ENCODE measurements at regions of chr7 and their contacts with region 1.

Region 1: DNA sequence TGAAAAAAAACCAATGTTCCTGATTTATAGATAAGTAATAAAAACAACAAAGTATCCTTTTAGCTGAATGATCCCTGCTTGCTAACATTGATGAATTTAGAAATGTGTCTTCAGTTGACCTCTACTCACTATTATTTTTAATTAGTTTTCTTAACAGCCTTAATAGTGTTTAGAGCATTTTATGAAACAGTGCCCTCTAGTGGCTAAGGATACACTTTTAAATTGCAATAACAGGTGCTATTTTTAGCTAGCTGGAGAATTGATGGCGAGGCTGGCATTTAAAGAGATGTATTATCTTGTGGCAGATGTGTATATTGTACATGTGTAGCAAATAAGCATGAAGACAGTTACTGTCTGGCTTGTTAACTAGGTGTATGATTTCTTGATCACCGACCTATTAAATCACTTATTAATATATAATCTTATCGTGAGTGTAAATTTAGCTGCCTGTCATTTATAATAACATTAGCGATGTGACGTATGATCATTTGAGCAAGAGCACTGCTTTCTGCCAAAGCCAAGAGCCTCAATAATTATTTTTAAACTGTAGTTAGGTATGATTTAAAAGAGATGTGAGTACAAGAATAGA is 451.9 kb downstream of the DPP6 start:
- DNase-seq: no peak
- ATAC-seq: no peak
- H3K4me3 Mint-ChIP-seq: no peak overlapping the region
- H3K27ac Mint-ChIP-seq: no peak overlapping the region
- H3K4me1 Mint-ChIP-seq: no peaks in the 10 kb centered on the region
- H3K27me3 Mint-ChIP-seq: no peaks in the 10 kb centered on the region
- CTCF ChIP-seq: no peak

Region 2: DNA sequence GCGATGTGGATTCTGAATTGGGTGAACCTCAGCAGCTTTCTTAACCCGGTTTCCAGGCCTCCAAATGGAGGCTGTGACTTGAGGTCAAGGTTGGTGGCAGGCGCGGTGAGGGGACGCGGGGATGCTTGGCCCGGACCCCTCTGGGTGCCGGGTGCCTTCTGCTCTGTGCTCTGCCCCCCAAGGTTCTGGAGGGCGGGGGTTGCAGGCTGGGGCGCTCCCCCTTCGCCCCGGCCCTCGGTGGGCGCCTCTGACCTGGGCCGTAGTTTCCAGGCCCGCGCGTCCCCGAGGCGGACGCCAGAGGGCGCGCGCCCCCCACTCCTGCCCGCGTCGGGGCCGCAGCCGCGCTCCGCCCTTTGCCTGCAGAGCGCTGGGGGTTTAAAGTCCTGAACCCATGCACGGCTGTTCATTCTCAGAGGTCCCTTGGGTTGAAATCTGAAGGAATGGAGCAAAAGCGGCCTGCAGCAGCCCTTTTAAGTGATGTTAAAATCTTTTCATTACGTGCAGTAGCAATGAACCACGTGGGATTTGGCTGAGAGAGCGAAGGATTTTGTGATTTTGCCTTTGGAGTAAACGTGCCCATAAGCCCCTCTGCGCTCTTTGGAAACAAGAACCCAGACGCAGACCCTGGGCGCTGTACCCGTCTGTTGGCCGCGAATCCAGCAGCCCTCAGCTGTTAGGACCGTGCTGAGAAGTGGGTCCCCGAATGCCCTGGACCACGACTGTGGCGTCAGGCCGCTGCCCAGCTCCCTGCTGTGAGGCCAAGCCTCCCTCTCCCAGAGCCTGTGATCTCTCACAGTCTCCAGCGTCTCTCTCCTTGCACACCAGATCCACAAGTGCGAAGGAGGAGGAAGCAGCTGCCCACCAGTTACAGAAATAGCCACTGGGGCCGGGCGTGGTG is 1609.5 kb before region 1 on chr7:
- CTCF ChIA-PET with region 1: interaction called, 3 read pairs
- POLR2A ChIA-PET with region 1: no interaction called
- intact Hi-C with region 1: loop called (anchors 10 kb)
- DNase-seq: no peak
- ATAC-seq: no peak
- H3K4me3 Mint-ChIP-seq: no peak overlapping the region
- H3K27ac Mint-ChIP-seq: no peak overlapping the region
- H3K4me1 Mint-ChIP-seq: no peaks in the 10 kb centered on the region
- H3K27me3 Mint-ChIP-seq: peaks cover 8% of the 10 kb centered on the region
- CTCF ChIP-seq: peak; percentile 56

Measured in activated B cell treated with CpG ODN at 0.5 μM for 24 hours (primary cell).